HEK293 (cell line): ENCODE measurements at regions of chr20 and their contacts with region 1.

Region 1: DNA sequence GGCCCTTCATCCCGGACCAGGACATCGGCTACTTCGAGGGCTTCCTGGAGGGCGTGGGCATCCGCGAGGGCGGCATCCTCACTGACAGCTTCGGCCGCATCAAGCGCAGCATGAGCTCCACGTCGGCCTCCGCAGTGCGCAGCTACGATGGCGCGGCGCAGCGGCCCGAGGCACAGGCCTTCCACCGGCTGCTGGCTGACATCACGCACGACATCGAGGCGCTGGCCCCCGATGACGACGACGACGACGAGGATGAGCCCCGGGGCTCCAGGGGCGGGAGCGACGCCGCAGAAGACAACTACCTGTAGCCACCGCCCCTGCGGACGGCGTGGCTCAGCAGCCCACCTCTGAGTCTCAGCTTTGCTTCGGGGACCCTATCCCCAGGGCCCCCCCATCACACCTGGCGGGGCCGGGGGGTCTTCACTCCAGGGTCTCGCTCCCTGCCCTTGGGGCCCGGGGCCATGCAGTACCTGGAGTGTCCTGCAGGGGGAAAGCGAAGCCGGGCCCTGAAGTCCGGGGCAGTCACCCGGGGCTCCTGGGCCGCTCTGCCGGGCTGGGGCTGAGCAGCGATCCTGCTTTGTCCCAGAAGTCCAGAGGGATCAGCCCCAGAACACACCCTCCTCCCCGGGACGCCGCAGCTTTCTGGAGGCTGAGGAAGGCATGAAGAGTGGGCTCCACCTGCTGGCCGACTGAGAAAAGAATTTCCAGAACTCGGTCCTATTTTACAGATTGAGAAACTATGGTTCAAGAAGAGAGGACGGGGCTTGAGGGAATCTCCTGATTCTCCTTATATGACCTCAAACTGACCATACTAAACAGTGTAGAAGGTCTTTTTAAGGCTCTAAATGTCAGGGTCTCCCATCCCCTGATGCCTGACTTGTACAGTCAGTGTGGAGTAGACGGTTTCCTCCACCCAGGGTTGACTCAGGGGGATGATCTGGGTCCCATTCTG is 20.8 kb upstream of the HCK start:
- H3K4me3 ChIP-seq: no peak overlapping the region; the same call in 1 of the 2 replicates
- H3K27ac ChIP-seq: no peak overlapping the region
- H3K4me1 ChIP-seq: no peaks in the 10 kb centered on the region
- CTCF ChIP-seq: peak; percentile 88; the same call in 1 of the 2 replicates

Region 2: GRCh38 chr20:31856516-31856915 is 174.8 kb before region 1 on chr20:
- CTCF ChIA-PET with region 1: interaction called, 128 read pairs
- POLR2A ChIA-PET with region 1: no interaction called
- H3K4me3 ChIP-seq: no peak overlapping the region
- H3K27ac ChIP-seq: no peak overlapping the region
- H3K4me1 ChIP-seq: no peaks in the 10 kb centered on the region
- CTCF ChIP-seq: no peak

Region 3: DNA sequence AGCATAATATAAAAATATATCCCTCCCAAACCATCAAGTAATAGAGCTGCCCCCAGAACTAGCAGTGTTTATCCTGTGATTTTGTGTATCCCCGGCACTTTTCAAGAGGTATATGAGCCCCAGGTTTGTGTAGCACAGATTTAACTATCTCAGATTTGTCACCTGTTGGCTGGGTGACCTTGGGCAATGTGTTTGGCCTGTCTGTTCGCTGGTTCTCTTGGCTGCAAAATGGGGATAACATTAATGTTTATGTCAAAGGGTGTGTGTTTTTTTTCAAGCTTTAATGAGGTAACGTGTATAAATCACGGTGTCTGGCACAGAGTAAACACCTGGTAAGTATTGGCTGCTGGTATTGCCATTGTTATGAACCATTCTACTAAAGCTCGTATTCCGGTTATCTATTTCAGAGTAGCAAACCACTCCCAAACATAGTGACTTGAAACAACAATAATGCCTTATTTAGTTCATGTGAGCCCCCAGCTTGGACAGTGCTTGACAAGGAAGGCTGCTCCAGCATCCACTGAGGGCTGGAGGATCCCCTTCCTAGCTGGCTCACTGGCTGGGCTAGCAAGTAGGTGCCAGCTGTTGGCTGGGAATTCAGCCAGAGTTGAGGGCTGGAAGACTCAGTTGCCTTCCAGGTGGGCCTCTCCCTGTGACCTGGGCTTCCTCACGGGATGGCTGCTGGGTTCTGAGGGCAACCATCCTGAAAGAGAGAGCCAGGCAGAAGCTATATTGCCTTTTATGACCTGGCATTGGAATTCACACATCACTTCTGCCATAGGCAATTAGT is 115.6 kb before region 1 on chr20:
- CTCF ChIA-PET with region 1: no interaction called
- POLR2A ChIA-PET with region 1: no interaction called
- H3K4me3 ChIP-seq: no peak overlapping the region
- H3K27ac ChIP-seq: no peak overlapping the region
- H3K4me1 ChIP-seq: peaks cover 9% of the 10 kb centered on the region
- CTCF ChIP-seq: no peak

Region 4: GRCh38 chr20:32018269-32019074 is 12.8 kb before region 1 on chr20:
- CTCF ChIA-PET with region 1: interaction called, 25 read pairs
- POLR2A ChIA-PET with region 1: no interaction called
- H3K4me3 ChIP-seq: peak overlapping the region; percentile 62
- H3K27ac ChIP-seq: no peak overlapping the region
- H3K4me1 ChIP-seq: no peaks in the 10 kb centered on the region
- CTCF ChIP-seq: no peak

Region 5: DNA sequence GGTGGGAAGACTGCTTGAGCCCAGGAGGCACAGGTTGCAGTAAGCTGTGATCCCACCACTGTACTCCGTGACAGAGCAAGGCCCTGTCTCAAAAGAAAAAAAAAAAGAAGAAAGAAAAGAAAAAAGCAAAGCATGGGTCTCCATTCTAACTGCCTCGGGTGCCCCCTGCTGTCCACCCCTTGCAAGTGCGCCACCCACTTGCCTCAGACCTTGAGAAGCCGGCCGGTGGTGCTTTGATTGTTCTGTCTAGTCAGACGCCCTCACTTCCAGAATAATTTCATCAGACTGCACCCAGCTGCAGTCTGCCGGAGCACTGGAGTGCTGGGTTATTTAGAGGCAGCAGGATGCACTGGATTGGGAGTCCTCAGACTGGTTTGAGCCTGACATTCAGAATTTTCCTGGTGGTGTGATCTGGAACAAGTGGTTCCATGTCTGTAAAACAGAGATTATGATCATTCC is 60.6 kb after region 1 on chr20:
- CTCF ChIA-PET with region 1: interaction called, 10 read pairs
- POLR2A ChIA-PET with region 1: no interaction called
- H3K4me3 ChIP-seq: no peak overlapping the region
- H3K27ac ChIP-seq: no peak overlapping the region
- H3K4me1 ChIP-seq: no peaks in the 10 kb centered on the region
- CTCF ChIP-seq: peak; percentile 89